Activated CD8-positive, alpha-beta T cell treated with anti-CD3 and anti-CD28 coated beads, Interleukin-2, amount 10 ng/mL, durations not matched to agents 7 days and 5 days (primary cell): ENCODE measurements at regions of chr2 and their contacts with region 1.

Region 1: GRCh38 chr2:191165176-191165643 is 14.4 kb upstream of the STAT4 start:
- DNase-seq: peak; percentile 47
- ATAC-seq: peak; percentile 87
- H3K4me3 Mint-ChIP-seq: no peak overlapping the region
- H3K27ac Mint-ChIP-seq: no peak overlapping the region
- H3K4me1 Mint-ChIP-seq: peaks cover 22% of the 10 kb centered on the region
- H3K27me3 Mint-ChIP-seq: peaks cover 12% of the 10 kb centered on the region

Region 2: GRCh38 chr2:191302459-191303139 is 137.4 kb after region 1 on chr2:
- CTCF ChIA-PET with region 1: interaction called, 18 read pairs
- POLR2A ChIA-PET with region 1: no interaction called
- DNase-seq: no peak
- ATAC-seq: no peak
- H3K4me3 Mint-ChIP-seq: no peak overlapping the region
- H3K27ac Mint-ChIP-seq: no peak overlapping the region
- H3K4me1 Mint-ChIP-seq: no peaks in the 10 kb centered on the region
- H3K27me3 Mint-ChIP-seq: peaks cover 3% of the 10 kb centered on the region

Region 3: DNA sequence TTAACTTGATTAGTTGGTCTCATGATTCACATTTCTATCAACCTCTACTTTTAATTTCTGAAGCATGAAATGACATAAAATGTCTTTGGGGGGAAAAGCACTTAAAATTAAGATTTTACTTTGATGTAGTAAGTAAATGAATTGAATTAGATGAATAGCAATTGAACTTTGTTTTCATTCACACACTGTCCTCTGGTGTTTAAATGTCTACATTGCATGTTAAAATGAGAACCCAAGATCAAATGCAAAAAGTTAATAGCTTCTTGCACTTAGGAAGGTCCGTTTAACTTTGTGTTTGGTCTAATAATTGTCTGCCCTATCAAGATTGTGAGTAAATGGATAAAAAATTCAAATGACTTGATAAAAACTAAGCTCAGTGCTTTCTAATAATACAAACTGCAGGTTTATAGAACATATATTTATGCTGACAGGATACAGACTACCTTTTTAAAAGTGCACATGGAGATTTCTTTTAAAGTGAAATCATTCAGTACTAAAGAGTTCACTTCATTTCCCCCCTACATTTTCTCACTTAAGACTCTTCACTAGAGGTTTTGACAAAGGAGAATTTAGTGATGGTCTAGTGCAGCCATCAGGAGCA is 356.5 kb after region 1 on chr2:
- CTCF ChIA-PET with region 1: interaction called, 27 read pairs
- POLR2A ChIA-PET with region 1: no interaction called
- DNase-seq: no peak
- ATAC-seq: no peak
- H3K4me3 Mint-ChIP-seq: no peak overlapping the region
- H3K27ac Mint-ChIP-seq: no peak overlapping the region
- H3K4me1 Mint-ChIP-seq: no peaks in the 10 kb centered on the region
- H3K27me3 Mint-ChIP-seq: peaks cover 17% of the 10 kb centered on the region

Region 4: DNA sequence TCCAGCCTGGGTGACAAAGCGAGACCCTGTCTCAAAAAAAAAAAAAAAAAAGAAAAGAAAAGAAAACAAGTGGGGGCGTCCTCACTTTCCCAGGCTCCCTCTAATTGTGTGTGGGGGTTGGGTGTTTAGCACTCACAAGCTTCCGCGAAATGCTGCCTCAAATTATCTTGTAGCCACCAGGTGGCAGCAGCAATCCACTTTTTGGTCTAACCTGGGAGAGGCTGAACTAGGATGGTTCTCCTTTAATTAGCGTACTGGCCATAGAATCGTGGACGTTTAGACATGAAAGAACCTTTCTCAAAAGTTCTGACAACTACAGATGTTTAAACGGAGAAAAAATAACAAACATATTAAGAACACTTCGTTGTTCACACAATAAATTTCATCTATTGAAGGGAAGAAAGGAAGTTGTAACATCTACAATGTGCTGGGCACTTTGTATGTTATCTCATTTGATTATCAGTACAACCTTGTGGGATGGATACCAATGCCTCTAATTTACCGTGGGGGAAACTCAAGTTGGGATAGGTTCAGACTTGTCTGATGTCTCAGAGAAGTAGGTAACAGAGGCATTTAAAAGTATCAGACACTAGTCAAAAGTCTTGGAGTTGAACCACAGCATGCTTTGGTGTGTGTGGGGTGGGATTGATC is 390.0 kb after region 1 on chr2:
- CTCF ChIA-PET with region 1: interaction called, 11 read pairs
- POLR2A ChIA-PET with region 1: no interaction called
- DNase-seq: peak; percentile 87
- ATAC-seq: peak; percentile 88
- H3K4me3 Mint-ChIP-seq: no peak overlapping the region
- H3K27ac Mint-ChIP-seq: no peak overlapping the region
- H3K4me1 Mint-ChIP-seq: peaks cover 21% of the 10 kb centered on the region
- H3K27me3 Mint-ChIP-seq: peaks cover 28% of the 10 kb centered on the region